ENCODE measurements at regions of chr12 and their contacts with region 1.

Region 1: GRCh38 chr12:56104109-56104814 is at the start of gene PA2G4:
- DNase-seq: peak; percentile 94
- ATAC-seq: peak; percentile 99
- H3K4me3 ChIP-seq: peak within 1 kb of the TSS; percentile 72 to 93
- H3K27ac ChIP-seq: peak within 1 kb of the TSS; percentile 94
- H3K4me1 ChIP-seq: peaks cover 20% of the 10 kb centered on the region
- H3K27me3 ChIP-seq: no peaks in the 10 kb centered on the region; the same call in 1 of the 2 replicates
- CTCF ChIP-seq: no peak
- total RNA-seq, gene PA2G4: 175 TPM

Region 2: DNA sequence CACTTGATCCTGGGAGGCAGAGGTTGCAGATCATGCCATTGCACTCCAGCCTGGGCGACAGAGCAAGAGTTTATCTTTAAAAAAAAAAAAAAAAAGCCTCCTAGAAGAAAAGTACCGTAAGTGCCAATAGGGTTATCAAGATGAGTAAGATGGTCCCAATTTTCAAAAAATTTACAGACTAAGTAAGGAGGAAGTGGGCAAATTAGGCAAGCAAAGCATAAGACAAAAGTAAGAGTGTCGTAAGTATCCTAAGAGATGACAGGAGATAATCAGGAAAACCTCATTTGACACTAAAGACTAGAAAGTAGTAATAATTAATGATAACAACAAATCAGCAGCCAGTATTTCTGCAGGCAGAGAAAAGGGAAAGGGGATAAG is 188.8 kb before region 1 on chr12:
- CTCF ChIA-PET with region 1: no interaction called
- POLR2A ChIA-PET with region 1: interaction called, 14 read pairs
- in situ Hi-C with region 1: no loop called
- intact Hi-C with region 1: no loop called
- DNase-seq: no peak
- ATAC-seq: no peak
- H3K4me3 ChIP-seq: no peak overlapping the region
- H3K27ac ChIP-seq: no peak overlapping the region
- H3K4me1 ChIP-seq: no peaks in the 10 kb centered on the region
- H3K27me3 ChIP-seq: no peaks in the 10 kb centered on the region
- CTCF ChIP-seq: no peak

Region 3: DNA sequence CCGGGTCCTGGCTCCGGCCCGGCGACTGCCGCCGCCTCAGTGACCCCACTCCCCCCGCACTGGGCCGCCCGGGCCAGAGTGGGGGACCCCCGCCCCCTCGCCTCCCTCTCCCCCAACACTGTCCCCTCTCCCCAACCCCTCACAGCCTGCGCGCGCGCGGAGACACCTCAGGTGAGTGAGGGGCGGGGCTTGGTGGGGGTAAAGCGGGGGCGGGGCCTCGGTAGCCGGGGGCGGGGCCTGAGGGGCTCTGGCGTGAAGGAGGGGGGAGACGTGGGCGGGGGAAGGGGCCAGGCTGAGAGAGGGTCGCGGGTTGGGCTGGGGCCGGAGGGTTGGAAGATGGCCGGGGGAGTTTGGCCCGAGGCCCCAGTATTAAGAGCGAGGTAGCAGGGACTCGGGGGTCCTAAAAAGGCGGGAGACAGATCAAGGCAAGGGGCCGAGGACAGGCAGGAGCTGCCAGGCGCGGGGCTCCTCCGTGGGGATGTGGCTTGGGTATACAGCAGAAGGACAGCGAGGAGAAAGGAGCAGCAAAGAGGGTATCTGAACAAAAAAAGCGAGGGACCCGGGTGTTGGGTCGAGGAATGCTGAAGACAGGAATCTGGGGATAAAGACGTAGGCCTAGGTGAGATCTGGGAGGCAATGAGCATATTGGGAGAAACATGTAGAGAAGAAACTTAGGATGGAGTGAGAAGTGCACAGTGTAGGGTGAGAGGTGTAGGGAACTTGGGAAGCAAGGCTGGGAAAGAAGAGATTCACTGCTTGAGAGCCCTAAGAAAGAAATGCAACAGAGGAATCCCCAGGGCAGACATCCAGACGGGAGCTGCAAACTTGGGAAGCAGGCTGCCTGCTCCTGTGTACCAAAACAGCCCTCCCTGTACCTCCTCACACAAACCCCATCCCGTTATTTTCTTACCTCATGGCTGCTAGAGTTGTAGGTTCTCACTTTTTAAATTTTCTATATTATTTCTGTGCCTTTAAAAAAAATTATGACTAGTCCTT is 96.4 kb before region 1 on chr12:
- CTCF ChIA-PET with region 1: no interaction called
- POLR2A ChIA-PET with region 1: interaction called, 10 read pairs
- in situ Hi-C with region 1: no loop called
- intact Hi-C with region 1: no loop called
- DNase-seq: no peak
- ATAC-seq: peak; percentile 84
- H3K4me3 ChIP-seq: peak overlapping the region; percentile 63 to 80
- H3K27ac ChIP-seq: peak overlapping the region; percentile 65
- H3K4me1 ChIP-seq: peaks cover 5% of the 10 kb centered on the region; the same call in 1 of the 2 replicates
- H3K27me3 ChIP-seq: no peaks in the 10 kb centered on the region
- CTCF ChIP-seq: no peak